CD14-positive monocyte (primary cell): ENCODE measurements at regions of chr12 and their contacts with region 1.

Region 1: GRCh38 chr12:120725659-120726509 is at the start of gene ACADS:
- DNase-seq: peak; percentile 74 to 84 (median 84)
- H3K4me3 ChIP-seq: peak within 1 kb of the TSS; percentile 45 to 88 (median 88)
- H3K4me3 Mint-ChIP-seq: peak within 1 kb of the TSS; percentile 87 to 93
- H3K27ac ChIP-seq: peak within 1 kb of the TSS in 1 of 2 donors; percentile 74
- H3K27ac Mint-ChIP-seq: peak within 1 kb of the TSS; percentile 14 to 88 (median 76)
- H3K4me1 ChIP-seq: peaks cover 16 to 22% of the 10 kb centered on the region in 2 donors
- H3K4me1 Mint-ChIP-seq: peaks cover 36% of the 10 kb centered on the region
- H3K27me3 ChIP-seq: no peaks in the 10 kb centered on the region
- H3K27me3 Mint-ChIP-seq: peaks cover 0 to 1% (median 1%) of the 10 kb centered on the region in 3 donors
- CTCF ChIP-seq: no peak
- polyA plus RNA-seq, gene ACADS: 9.2 to 25.1 (median 18.2) TPM

Region 2: GRCh38 chr12:120686690-120687577 is 39.0 kb before region 1 on chr12 and contains the start of gene MLEC:
- intact Hi-C with region 1: loop called (anchors 5 kb)
- DNase-seq: peak; percentile 97 to 98 (median 98)
- H3K4me3 ChIP-seq: peak within 1 kb of the TSS; percentile 65 to 92 (median 78)
- H3K4me3 Mint-ChIP-seq: peak within 1 kb of the TSS; percentile 84 to 92
- H3K27ac ChIP-seq: peak within 1 kb of the TSS; percentile 94 to 96
- H3K27ac Mint-ChIP-seq: peak within 1 kb of the TSS; percentile 94 to 99 (median 97)
- H3K4me1 ChIP-seq: peaks cover 47 to 50% of the 10 kb centered on the region in 2 donors
- H3K4me1 Mint-ChIP-seq: peaks cover 59% of the 10 kb centered on the region
- H3K27me3 ChIP-seq: no peaks in the 10 kb centered on the region
- H3K27me3 Mint-ChIP-seq: peaks cover 0 to 2% (median 0%) of the 10 kb centered on the region in 3 donors
- CTCF ChIP-seq: no peak
- polyA plus RNA-seq, gene MLEC: 10.9 to 79.5 (median 65.3) TPM

Region 3: GRCh38 chr12:120783197-120783596 is 57.3 kb after region 1 on chr12:
- intact Hi-C with region 1: no loop called
- DNase-seq: peak; percentile 13 to 66 (median 36)
- H3K4me3 ChIP-seq: no peak overlapping the region
- H3K4me3 Mint-ChIP-seq: no peak overlapping the region
- H3K27ac ChIP-seq: peak overlapping the region in 1 of 2 donors; percentile 64
- H3K27ac Mint-ChIP-seq: peak overlapping the region in 4 of 7 donors; percentile 0 to 45 (median 27)
- H3K4me1 ChIP-seq: peaks cover 6 to 11% of the 10 kb centered on the region in 2 donors
- H3K4me1 Mint-ChIP-seq: peaks cover 10% of the 10 kb centered on the region
- H3K27me3 ChIP-seq: no peaks in the 10 kb centered on the region
- H3K27me3 Mint-ChIP-seq: no peaks in the 10 kb centered on the region
- CTCF ChIP-seq: no peak

Region 4: DNA sequence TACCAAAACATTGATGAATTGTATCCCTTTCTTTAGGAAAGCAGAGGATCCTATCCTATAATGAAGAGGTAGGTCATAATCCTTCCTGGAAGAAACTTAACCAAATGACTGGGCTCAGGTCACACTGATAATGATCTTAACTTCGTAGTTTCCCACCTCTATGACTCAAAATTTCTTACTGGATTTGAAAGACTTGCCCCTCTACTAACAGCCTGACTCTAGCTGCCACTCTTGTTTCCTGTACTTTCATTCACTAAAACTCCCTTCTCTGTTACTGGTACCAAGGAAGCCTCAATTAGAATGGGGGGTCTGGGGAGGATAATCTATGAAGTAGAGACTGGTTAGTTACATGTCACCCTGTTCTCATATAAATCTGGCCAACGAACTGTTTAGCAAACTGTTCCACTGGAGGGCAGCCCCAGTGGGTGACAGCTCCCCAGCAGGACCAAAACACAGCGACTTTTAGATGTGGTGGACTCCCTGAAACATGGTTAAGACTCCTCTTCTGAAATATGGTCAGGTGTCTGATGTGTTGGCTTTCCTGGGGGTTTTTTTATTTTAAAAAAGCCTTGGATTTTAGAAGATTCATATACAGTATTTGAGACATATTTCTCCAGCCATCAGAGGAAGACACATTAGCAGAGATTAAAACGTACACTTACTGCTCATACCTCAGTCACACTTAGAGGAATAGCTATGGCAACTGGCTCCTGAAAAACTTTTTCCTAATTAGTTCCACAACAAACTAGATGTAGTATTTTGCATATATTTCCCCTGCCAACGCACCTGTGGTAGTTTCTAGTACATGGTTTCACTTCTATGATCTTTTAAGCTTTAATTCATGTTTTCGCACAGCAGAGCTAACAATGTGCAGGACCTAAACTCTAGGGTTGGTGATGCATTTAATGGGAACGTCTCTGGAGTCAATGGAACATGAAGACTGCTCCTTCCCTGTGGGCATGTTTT is 72.1 kb after region 1 on chr12:
- intact Hi-C with region 1: no loop called
- DNase-seq: no peak
- H3K4me3 ChIP-seq: no peak overlapping the region
- H3K4me3 Mint-ChIP-seq: no peak overlapping the region
- H3K27ac ChIP-seq: no peak overlapping the region
- H3K27ac Mint-ChIP-seq: peak overlapping the region in 1 of 7 donors; percentile 32
- H3K4me1 ChIP-seq: no peaks in the 10 kb centered on the region
- H3K4me1 Mint-ChIP-seq: peaks cover 9% of the 10 kb centered on the region
- H3K27me3 ChIP-seq: no peaks in the 10 kb centered on the region
- H3K27me3 Mint-ChIP-seq: no peaks in the 10 kb centered on the region
- CTCF ChIP-seq: no peak